ENCODE measurements at regions of chr2 and their contacts with region 1.

Region 1: DNA sequence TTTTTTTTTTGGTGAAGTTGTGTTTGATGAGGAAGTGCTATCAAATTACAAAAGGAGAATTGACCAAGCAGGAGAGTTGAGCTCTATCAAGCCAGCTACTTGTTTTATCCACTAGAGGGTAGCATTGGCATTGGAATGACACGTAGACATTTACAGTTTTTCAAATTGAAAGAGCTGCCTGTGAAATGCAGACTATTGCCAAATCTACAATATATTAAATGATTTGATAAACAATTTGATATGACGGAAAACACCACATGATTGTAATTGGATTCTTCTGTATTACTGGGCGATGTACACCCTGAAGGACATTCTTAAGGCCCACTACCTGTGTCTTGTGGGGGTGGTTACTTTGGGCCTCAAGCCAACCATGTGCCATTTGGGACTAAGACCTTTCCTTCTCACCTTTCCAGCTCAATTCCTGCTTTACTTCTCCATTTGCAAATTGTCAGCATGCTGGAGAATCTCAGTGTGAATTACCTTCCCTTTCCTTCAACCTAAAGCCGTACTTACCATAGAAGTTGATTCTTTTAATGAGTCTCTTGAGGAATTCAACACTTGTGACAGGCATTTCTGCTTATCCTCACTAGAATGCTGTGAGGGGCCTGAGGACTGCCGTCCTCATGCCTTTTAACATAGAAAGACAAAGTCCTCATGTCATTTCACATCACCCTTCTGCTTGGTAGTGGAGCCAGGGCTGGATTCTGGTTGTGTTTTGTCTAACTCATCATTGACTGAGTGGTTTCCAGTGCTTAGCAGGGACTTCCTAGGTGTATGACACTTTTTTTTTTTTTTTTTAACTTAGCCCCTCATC is 134.8 kb upstream of the THUMPD2 start:
- DNase-seq: peak; percentile 79
- H3K4me3 Mint-ChIP-seq: no peak overlapping the region
- H3K27ac Mint-ChIP-seq: no peak overlapping the region
- H3K4me1 Mint-ChIP-seq: peaks cover 7% of the 10 kb centered on the region
- H3K27me3 Mint-ChIP-seq: peaks cover 9% of the 10 kb centered on the region
- CTCF ChIP-seq: peak; percentile 76

Region 2: GRCh38 chr2:39837856-39838453 is 75.9 kb before region 1 on chr2:
- CTCF ChIA-PET with region 1: interaction called, 5 read pairs
- POLR2A ChIA-PET with region 1: no interaction called
- intact Hi-C with region 1: loop called (anchors 2 kb)
- DNase-seq: peak; percentile 59
- H3K4me3 Mint-ChIP-seq: no peak overlapping the region
- H3K27ac Mint-ChIP-seq: no peak overlapping the region
- H3K4me1 Mint-ChIP-seq: no peaks in the 10 kb centered on the region
- H3K27me3 Mint-ChIP-seq: no peaks in the 10 kb centered on the region
- CTCF ChIP-seq: peak; percentile 69

Region 3: GRCh38 chr2:40230707-40231432 is 317.0 kb after region 1 on chr2:
- CTCF ChIA-PET with region 1: no interaction called
- POLR2A ChIA-PET with region 1: no interaction called
- intact Hi-C with region 1: loop called (anchors 1 kb)
- DNase-seq: peak; percentile 22
- H3K4me3 Mint-ChIP-seq: no peak overlapping the region
- H3K27ac Mint-ChIP-seq: no peak overlapping the region
- H3K4me1 Mint-ChIP-seq: no peaks in the 10 kb centered on the region
- H3K27me3 Mint-ChIP-seq: no peaks in the 10 kb centered on the region
- CTCF ChIP-seq: no peak

Region 4: DNA sequence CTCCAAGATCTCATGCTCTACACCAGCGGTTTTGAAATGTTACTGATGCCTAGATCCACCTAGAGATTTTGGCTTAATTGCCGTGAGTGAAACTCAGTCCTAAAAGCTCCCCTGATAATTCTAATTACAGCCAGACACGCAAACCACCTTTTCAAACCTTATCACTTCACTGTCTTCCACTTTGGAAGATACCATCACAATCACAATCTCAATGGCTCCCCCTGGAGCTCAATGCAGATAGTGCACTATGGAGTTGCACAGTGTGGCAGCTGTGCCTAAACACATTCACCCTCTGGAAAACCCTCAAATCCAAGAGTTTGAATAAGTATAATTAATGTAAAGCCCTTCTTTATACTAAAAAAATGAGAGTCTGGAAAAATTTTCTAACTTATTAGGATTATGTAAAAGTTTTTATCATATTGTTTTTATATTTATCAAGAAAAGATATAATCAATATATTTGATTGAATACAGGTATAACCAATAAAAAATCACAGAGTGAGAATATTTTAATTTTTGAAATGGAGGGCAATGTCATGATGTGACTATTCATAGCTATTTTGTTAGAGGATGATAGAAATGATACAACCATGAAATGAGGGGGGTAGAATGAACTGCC is 640.9 kb after region 1 on chr2:
- CTCF ChIA-PET with region 1: interaction called, 95 read pairs
- POLR2A ChIA-PET with region 1: no interaction called
- intact Hi-C with region 1: loop called (anchors 1 kb)
- DNase-seq: peak; percentile 79
- H3K4me3 Mint-ChIP-seq: no peak overlapping the region
- H3K27ac Mint-ChIP-seq: no peak overlapping the region
- H3K4me1 Mint-ChIP-seq: peaks cover 6% of the 10 kb centered on the region
- H3K27me3 Mint-ChIP-seq: no peaks in the 10 kb centered on the region
- CTCF ChIP-seq: peak; percentile 88

Region 5: DNA sequence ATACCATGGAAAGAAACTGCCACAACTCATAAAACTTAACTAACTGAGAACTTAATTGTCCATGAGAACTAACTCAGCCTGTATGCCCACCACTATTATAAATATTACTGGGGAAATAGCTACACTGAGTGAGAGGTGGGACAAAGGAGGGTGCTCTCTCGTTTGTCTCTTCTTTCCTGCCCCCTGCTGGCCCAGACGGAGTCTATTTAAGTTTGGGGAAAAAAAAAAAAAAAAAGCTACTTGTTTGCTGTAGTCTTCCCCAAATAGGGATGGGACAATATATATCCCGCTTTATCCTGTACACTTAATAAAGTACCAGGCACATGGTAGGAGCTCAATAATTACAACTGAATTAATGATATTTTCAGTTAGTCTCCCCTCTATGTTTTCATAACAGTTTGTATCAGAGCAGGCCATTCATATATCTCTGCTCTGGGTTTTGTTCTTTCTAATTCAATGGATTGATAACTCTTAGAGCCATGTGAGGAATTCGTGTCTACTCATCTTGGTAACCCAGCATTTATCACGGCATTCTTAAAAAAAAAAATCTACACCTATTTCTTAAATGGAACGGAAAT is 1486.3 kb after region 1 on chr2:
- CTCF ChIA-PET with region 1: no interaction called
- POLR2A ChIA-PET with region 1: no interaction called
- intact Hi-C with region 1: loop called (anchors 10 kb)
- DNase-seq: peak; percentile 39
- H3K4me3 Mint-ChIP-seq: no peak overlapping the region
- H3K27ac Mint-ChIP-seq: no peak overlapping the region
- H3K4me1 Mint-ChIP-seq: no peaks in the 10 kb centered on the region
- H3K27me3 Mint-ChIP-seq: peaks cover 33% of the 10 kb centered on the region
- CTCF ChIP-seq: peak; percentile 5

Region 6: DNA sequence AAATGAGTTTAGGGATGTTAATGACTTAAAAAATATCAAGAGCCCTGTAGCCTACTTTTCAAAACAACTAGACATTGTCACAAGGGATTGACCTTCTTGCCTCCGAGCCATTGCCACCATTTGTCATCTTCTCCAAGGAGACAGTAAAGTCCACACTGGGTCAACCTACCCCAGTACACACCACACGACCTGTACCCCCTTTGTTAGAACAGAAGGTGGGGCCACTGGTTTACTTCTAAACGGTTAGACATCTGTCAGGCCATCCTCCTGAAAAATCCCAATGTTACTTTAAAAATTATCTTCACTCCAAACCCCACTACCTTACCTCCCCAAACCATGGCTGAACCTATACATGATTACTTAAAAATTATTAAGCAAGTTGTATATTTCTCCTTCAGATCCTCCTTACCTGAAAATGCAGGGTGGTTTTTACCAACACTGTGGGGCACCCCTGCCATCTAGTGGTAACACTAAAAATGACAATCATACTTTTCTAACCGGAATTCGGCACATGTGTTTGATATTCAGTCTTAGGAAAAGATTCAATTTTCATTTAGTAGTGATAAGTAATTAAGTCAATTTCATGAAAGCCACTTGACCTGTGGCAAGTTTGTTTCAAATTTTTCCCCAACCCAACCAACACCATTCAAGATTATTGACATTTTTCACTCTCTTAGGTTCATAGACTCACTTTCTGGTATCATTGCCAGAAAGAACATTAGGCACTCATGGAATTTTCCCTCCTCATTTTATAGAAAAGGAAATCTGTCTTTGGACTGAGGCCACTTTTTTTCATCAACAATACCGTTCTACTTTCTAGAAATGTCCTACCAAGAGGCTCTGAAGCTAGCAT is 1868.7 kb after region 1 on chr2:
- CTCF ChIA-PET with region 1: interaction called, 3 read pairs
- POLR2A ChIA-PET with region 1: no interaction called
- intact Hi-C with region 1: loop called (anchors 1 kb)
- DNase-seq: peak; percentile 56
- H3K4me3 Mint-ChIP-seq: no peak overlapping the region
- H3K27ac Mint-ChIP-seq: no peak overlapping the region
- H3K4me1 Mint-ChIP-seq: no peaks in the 10 kb centered on the region
- H3K27me3 Mint-ChIP-seq: peaks cover 3% of the 10 kb centered on the region
- CTCF ChIP-seq: peak; percentile 75